ENCODE measurements at regions of chr22 and their contacts with region 1.

Region 1: DNA sequence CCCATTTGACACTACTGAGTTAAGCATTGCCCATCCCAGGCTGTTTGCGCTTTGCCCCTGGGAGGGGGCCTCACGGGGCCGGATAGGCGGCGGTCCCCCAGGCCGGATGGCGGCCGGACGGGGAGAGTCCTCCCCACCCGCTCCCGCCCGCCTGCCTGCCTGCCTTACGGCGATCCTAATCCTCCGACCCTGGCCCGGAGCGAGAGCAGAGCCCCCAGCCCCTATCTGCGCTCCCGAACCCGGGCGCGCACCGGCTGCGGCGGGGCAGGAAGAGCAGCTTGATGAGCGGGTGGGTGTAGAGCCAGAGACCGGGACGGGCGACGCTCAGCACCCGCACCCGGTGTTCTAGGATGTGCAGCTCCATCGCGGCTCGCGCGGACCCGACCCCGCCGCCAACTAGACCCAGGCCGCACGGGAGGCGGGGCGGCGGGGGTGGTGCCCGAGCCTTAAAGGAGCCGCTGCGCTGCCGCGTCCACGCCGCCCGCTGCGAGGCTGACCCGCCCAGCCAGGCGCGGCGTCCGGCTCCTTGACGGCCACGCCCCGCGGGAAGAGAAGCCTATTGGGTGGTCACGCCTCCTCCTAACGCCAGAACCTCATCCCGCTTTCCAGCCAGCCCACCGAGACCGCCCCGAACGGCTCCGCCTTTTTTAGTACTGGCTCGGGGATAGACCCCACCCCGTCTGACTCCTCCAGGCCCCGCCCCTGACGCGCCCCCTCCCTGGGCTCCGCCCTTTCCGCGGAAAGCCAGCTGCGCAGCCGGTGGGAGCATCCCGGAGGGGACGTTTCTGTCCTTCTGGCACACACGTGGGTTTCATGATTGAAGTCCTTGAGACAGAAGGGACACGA is at the start of gene CASTOR1:
- DNase-seq: peak; percentile 86
- ATAC-seq: peak; percentile 83
- H3K4me3 ChIP-seq: peak within 1 kb of the TSS; percentile 48 to 83 (median 70)
- H3K4me3 Mint-ChIP-seq: peak within 1 kb of the TSS; percentile 93
- H3K27ac ChIP-seq: peak within 1 kb of the TSS; percentile 34 to 72
- H3K27ac Mint-ChIP-seq: peak within 1 kb of the TSS; percentile 93
- H3K4me1 ChIP-seq: peaks cover 23 to 44% of the 10 kb centered on the region in 2 donors
- H3K4me1 Mint-ChIP-seq: peaks cover 38% of the 10 kb centered on the region
- H3K27me3 ChIP-seq: no peaks in the 10 kb centered on the region
- H3K27me3 Mint-ChIP-seq: no peaks in the 10 kb centered on the region
- CTCF ChIP-seq: no peak
- total RNA-seq, gene CASTOR1: 12.3 and 16.3 TPM in 2 replicates

Region 2: GRCh38 chr22:30224161-30224857 is 65.0 kb before region 1 on chr22:
- CTCF ChIA-PET with region 1: no interaction called
- POLR2A ChIA-PET with region 1: no interaction called
- intact Hi-C with region 1: no loop called
- DNase-seq: no peak
- ATAC-seq: no peak
- H3K4me3 ChIP-seq: no peak overlapping the region
- H3K4me3 Mint-ChIP-seq: no peak overlapping the region
- H3K27ac ChIP-seq: no peak overlapping the region
- H3K27ac Mint-ChIP-seq: no peak overlapping the region
- H3K4me1 ChIP-seq: peaks cover 26 to 42% of the 10 kb centered on the region in 2 donors
- H3K4me1 Mint-ChIP-seq: peaks cover 21% of the 10 kb centered on the region
- H3K27me3 ChIP-seq: no peaks in the 10 kb centered on the region
- H3K27me3 Mint-ChIP-seq: peaks cover 13% of the 10 kb centered on the region
- CTCF ChIP-seq: no peak

Region 3: DNA sequence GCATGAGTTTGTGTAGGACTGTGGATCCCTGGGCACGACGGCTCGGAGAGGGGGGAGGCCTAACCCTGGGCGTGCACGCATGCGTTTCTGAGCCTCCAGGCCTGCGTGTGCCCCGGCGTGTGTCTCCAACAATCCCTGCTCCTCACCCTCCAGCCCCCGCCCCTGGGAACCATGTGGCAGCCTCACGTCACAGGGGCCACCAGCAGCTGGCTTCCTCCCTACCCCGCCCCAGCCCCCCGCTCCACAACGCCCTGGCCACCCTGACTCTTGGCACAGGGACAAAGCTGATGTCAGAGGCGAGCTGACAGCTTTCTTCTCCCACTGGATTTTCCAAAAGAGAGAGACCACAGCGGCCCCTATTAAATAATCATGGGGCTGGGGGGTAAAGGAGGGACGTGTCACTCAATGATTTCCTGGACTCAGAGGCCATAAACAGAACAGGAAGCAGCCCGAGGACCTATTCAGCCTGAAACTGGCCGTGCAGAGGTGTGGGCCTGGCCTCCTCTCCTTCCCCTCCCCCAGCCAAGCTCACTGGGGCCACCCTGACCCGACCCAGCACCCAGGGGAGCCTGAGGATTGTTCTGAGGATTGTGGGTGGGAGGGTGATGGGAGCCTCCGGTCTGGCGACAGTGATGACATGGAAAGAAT is 36.0 kb before region 1 on chr22:
- CTCF ChIA-PET with region 1: interaction called, 10 read pairs
- POLR2A ChIA-PET with region 1: no interaction called
- intact Hi-C with region 1: no loop called
- DNase-seq: no peak
- ATAC-seq: no peak
- H3K4me3 ChIP-seq: no peak overlapping the region
- H3K4me3 Mint-ChIP-seq: no peak overlapping the region
- H3K27ac ChIP-seq: no peak overlapping the region
- H3K27ac Mint-ChIP-seq: no peak overlapping the region
- H3K4me1 ChIP-seq: peaks cover 0 to 9% of the 10 kb centered on the region in 2 donors
- H3K4me1 Mint-ChIP-seq: peaks cover 3% of the 10 kb centered on the region
- H3K27me3 ChIP-seq: peaks cover 0 to 17% (median 4%) of the 10 kb centered on the region in 4 experiments
- H3K27me3 Mint-ChIP-seq: peaks cover 18% of the 10 kb centered on the region
- CTCF ChIP-seq: no peak

Region 4: DNA sequence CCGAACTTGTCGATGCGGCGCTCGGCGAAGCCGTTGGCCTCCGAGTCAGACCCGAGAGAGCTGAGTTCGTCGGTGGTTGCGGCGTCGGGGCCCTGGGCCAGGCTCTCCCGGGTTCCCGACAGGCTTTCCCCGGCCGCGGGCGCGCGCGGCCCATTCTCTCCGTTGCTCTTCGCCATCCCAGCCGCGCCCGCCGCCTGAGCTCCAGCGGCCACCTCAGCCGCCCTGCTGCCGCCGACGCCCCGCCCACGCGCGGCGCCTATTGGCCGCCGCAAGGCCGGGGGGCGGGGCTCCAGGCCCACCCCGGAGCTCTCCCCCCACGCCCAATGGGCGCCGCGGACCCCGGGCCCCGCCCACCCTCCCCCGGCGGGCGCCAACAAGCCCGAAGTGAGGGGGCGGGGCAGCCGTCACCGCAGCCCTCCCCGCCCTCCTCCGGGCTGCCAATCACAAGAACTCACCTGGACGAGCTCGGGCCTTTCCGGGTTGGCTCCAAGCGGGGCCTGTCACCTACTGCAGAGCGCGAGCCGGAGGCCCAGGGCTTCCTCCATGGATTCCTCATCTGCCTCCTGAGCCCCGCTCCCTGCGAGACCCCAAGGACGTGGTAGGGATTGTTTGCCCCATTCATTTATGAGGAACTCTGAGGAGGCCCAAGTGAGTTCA is 37.5 kb after region 1 on chr22 and contains the start of gene TBC1D10A:
- CTCF ChIA-PET with region 1: interaction called, 99 read pairs
- POLR2A ChIA-PET with region 1: interaction called, 64 read pairs
- intact Hi-C with region 1: loop called (anchors 1 kb)
- DNase-seq: peak; percentile 95
- ATAC-seq: peak; percentile 96
- H3K4me3 ChIP-seq: peak within 1 kb of the TSS; percentile 40 to 92 (median 83)
- H3K4me3 Mint-ChIP-seq: peak within 1 kb of the TSS; percentile 86
- H3K27ac ChIP-seq: peak within 1 kb of the TSS; percentile 57 to 88
- H3K27ac Mint-ChIP-seq: peak within 1 kb of the TSS; percentile 93
- H3K4me1 ChIP-seq: peaks cover 30 to 43% of the 10 kb centered on the region in 2 donors
- H3K4me1 Mint-ChIP-seq: peaks cover 49% of the 10 kb centered on the region
- H3K27me3 ChIP-seq: no peaks in the 10 kb centered on the region
- H3K27me3 Mint-ChIP-seq: no peaks in the 10 kb centered on the region
- CTCF ChIP-seq: no peak
- total RNA-seq, gene TBC1D10A: 44.7 and 45.2 TPM in 2 replicates

Region 5: GRCh38 chr22:30356449-30357235 is 67.3 kb after region 1 on chr22 and contains the starts of genes CCDC157 and SF3A1:
- CTCF ChIA-PET with region 1: interaction called, 169 read pairs
- POLR2A ChIA-PET with region 1: interaction called, 27 read pairs
- intact Hi-C with region 1: loop called (anchors 1 kb)
- DNase-seq: peak; percentile 95
- ATAC-seq: peak; percentile 88
- H3K4me3 ChIP-seq: peak within 1 kb of the TSS; percentile 92 to 98 (median 96)
- H3K4me3 Mint-ChIP-seq: peak within 1 kb of the TSS; percentile 91
- H3K27ac ChIP-seq: peak within 1 kb of the TSS; percentile 90 to 97
- H3K27ac Mint-ChIP-seq: peak within 1 kb of the TSS; percentile 91
- H3K4me1 ChIP-seq: peaks cover 24 to 35% of the 10 kb centered on the region in 2 donors
- H3K4me1 Mint-ChIP-seq: peaks cover 42% of the 10 kb centered on the region
- H3K27me3 ChIP-seq: no peaks in the 10 kb centered on the region
- H3K27me3 Mint-ChIP-seq: no peaks in the 10 kb centered on the region
- CTCF ChIP-seq: no peak
- total RNA-seq, gene CCDC157: 3.6 and 5.4 TPM in 2 replicates
- total RNA-seq, gene SF3A1: 283 and 286 TPM in 2 replicates

Region 6: DNA sequence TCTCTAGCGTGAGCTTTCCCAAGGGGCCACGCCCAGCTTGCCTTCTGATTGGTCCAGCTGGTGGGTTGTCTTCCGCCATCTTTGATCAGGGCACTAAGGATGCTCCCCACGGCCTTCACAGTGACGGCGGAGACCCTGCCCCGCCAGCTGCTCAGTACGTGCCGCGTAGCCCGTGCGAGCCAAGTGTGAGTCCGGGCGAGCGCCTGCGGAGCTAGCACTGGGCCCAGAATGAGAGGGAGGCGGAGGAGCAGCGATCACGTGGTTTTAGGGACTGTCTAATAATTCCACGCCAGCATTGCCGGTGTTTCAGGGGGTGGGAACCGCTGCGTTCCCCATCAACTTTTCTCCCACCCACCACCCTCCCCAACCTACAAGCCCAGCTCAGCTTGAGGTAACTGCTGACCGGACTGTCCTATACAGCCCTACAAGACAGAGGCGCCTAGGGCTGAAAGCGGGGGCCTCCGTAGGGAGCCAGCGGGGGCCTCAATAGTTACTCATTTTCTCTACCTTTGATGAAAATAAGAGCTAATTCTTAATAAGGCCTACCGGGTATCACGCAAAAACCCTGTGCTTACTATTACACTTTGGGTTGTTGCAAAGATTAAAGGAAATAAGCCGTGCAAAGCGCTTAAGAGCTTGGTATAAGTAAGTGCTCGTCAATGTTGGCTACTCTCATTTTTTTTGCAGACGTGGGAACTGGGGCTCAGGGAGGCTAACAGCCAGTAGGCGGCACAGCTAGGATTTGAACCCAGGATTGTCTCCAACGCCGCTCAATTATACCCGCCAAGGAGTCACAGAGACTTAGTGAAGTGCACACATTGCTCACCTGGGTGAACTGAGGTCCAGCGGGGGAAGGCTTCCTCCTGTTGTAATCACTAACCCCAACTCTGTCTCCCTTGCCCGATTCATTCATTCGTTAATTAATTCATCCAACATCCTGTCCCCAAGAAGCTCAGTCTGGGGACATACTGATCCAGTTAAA is 134.9 kb after region 1 on chr22:
- CTCF ChIA-PET with region 1: interaction called, 62 read pairs
- POLR2A ChIA-PET with region 1: interaction called, 16 read pairs
- intact Hi-C with region 1: loop called (anchors 1 kb)
- DNase-seq: peak; percentile 99
- ATAC-seq: peak; percentile 91
- H3K4me3 ChIP-seq: peak overlapping the region; percentile 54 to 84 (median 76)
- H3K4me3 Mint-ChIP-seq: peak overlapping the region; percentile 99
- H3K27ac ChIP-seq: peak overlapping the region; percentile 78 to 89
- H3K27ac Mint-ChIP-seq: peak overlapping the region; percentile 100
- H3K4me1 ChIP-seq: peaks cover 22 to 40% of the 10 kb centered on the region in 2 donors
- H3K4me1 Mint-ChIP-seq: peaks cover 48% of the 10 kb centered on the region
- H3K27me3 ChIP-seq: no peaks in the 10 kb centered on the region
- H3K27me3 Mint-ChIP-seq: no peaks in the 10 kb centered on the region
- CTCF ChIP-seq: no peak

Measured in B cell (primary cell).